ENCODE measurements at regions of chr14 and their contacts with region 1.

Region 1: GRCh38 chr14:67285876-67286452 is 44.7 kb downstream of the PALS1 start:
- DNase-seq: no peak
- H3K4me3 ChIP-seq: no peak overlapping the region
- H3K27ac ChIP-seq: no peak overlapping the region
- H3K4me1 ChIP-seq: no peaks in the 10 kb centered on the region
- H3K27me3 ChIP-seq: no peaks in the 10 kb centered on the region
- CTCF ChIP-seq: peak; percentile 52 to 60

Region 2: DNA sequence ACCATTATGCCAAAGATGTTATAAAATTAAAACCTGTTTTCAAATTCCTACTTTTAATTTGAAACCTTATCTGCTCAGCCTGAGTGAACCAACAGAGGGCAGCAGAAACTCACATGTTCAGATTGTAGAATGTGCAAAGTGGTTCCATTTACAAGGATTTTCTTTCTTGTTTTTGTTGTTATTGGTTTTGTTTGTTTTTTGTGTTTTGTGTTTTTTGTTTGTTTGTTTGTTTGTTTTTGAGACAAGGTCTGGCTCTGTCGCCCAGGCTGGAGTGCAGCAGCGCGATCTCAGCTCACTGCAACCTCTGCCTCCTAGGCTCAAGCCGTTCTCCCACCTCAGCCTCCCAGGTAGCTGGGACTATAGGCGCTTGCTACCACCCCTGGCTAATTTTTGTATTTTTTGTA is 119.5 kb before region 1 on chr14:
- intact Hi-C with region 1: loop called (anchors 5 kb)
- DNase-seq: no peak
- H3K4me3 ChIP-seq: no peak overlapping the region
- H3K27ac ChIP-seq: no peak overlapping the region
- H3K4me1 ChIP-seq: no peaks in the 10 kb centered on the region
- H3K27me3 ChIP-seq: no peaks in the 10 kb centered on the region
- CTCF ChIP-seq: peak; percentile 76 to 84

Region 3: GRCh38 chr14:67319142-67319541 is 33.2 kb after region 1 on chr14:
- intact Hi-C with region 1: no loop called
- DNase-seq: no peak
- H3K4me3 ChIP-seq: no peak overlapping the region
- H3K27ac ChIP-seq: no peak overlapping the region
- H3K4me1 ChIP-seq: no peaks in the 10 kb centered on the region
- H3K27me3 ChIP-seq: no peaks in the 10 kb centered on the region
- CTCF ChIP-seq: no peak